Tibial artery (tissue), 4 donors: ENCODE measurements at regions of chr6 and their contacts with region 1.

Region 1: GRCh38 chr6:25229671-25230321 is 49.4 kb upstream of the CARMIL1 start:
- DNase-seq: no peak
- H3K4me3 ChIP-seq: no peak overlapping the region
- H3K27ac ChIP-seq: no peak overlapping the region
- H3K4me1 ChIP-seq: peaks cover 0 to 5% (median 0%) of the 10 kb centered on the region in 4 donors
- H3K27me3 ChIP-seq: no peaks in the 10 kb centered on the region
- CTCF ChIP-seq: no peak

Region 2: DNA sequence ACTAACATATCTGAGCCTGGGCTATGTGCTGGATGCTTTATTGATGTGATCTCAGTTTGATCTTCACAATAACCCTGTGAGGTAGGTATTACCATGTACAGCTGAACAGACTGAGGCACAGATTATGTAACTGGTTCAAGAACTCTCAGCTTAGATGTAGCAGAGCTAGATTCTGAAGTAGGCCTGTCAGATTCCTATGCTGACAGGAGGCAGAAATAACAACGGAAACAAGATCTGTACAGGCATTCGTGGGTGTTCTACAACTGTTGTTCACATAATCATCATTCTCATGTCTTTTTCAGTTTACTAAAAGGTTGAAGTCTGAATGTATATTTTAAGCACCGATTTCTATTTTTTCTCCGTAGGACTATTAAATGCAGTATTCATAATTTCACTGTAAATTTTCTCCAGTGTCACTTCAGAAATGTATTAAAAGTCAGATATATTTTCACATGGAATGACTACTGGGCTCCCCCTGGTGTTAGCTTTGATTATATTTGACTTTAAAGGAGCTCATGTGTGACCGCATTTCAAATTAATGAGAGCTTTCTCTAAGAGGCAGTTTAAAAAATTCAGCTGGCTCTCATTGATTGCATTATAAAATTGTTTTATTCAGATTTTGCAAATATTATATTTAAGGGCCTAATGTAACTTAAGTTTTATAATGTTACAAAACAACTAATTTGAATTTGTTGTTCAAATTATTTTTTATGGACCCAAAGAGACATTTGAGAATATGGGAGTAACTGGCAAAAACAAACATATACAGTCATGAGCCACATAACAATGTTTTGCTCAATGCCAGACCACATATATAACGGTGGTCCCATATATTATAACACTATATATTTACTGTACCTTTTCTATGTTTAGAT is 488.3 kb after region 1 on chr6:
- intact Hi-C with region 1: loop called (anchors 5 kb)
- DNase-seq: no peak
- H3K4me3 ChIP-seq: no peak overlapping the region
- H3K27ac ChIP-seq: no peak overlapping the region
- H3K4me1 ChIP-seq: no peaks in the 10 kb centered on the region
- H3K27me3 ChIP-seq: no peaks in the 10 kb centered on the region
- CTCF ChIP-seq: peak; percentile 39 to 52